ENCODE measurements at regions of chr18 and their contacts with region 1.

Region 1: GRCh38 chr18:63320046-63320689 is 599 bp upstream of the BCL2 start:
- DNase-seq: peak; percentile 71
- H3K4me3 ChIP-seq: peak overlapping the region; percentile 4 to 66 (median 43)
- H3K27ac ChIP-seq: peak overlapping the region; percentile 44
- H3K4me1 ChIP-seq: peaks cover 25% of the 10 kb centered on the region
- H3K27me3 ChIP-seq: peaks cover 0 to 9% of the 10 kb centered on the region in 2 experiments
- CTCF ChIP-seq: no peak
- POLR2A ChIP-seq: no peak

Region 2: GRCh38 chr18:63016270-63016669 is 303.9 kb before region 1 on chr18:
- CTCF ChIA-PET with region 1: interaction called, 176 read pairs
- POLR2A ChIA-PET with region 1: no interaction called
- dilution Hi-C with region 1: no loop called
- intact Hi-C with region 1: loop called (anchors 1 kb)
- DNase-seq: peak; percentile 39
- H3K4me3 ChIP-seq: no peak overlapping the region
- H3K27ac ChIP-seq: no peak overlapping the region
- H3K4me1 ChIP-seq: no peaks in the 10 kb centered on the region
- H3K27me3 ChIP-seq: peaks cover 18 to 21% of the 10 kb centered on the region in 2 experiments
- CTCF ChIP-seq: peak; percentile 71 to 75
- POLR2A ChIP-seq: no peak

Region 3: DNA sequence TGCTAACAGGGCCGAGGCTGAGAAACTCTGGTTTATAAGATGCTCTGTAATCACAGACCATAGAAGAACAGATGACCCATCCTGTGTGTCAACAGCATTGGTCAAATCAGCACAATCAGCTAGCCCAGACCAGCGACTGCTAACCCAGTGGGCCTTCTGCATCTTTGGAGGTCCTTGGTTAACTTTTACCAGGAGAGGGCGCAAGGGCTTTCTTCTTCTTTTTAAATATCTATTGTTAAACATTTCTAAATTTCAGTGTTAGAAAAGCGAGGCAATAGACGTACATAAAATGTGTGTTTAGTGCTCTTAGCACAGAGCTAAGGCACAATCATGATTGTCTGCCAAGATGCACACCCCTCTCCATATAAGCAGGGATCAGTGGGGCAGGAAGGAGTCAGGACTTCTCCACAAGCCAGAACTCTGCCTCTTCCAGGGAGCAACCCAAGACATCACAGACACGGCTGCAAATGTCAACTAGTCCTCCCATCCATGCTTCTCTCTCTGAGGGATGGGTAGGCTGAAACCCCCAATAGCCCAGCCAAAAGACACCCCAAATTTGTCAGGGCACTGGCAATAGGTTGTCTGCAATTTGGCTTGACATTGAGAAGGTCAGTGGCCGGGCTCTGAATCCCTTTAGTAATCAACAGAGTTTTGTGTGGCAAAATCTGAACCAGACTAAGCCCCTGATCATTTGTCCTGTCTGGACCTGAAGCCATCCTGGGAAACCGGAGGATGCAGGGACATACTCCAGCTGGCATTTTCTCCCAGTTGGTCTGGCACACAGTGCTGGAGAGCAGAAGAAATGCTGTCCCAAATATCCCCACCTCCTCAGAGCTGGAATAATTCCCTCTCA is 188.8 kb before region 1 on chr18:
- CTCF ChIA-PET with region 1: interaction called, 96 read pairs
- POLR2A ChIA-PET with region 1: no interaction called
- dilution Hi-C with region 1: no loop called
- intact Hi-C with region 1: loop called (anchors 1 kb)
- DNase-seq: peak; percentile 52
- H3K4me3 ChIP-seq: no peak overlapping the region
- H3K27ac ChIP-seq: no peak overlapping the region
- H3K4me1 ChIP-seq: no peaks in the 10 kb centered on the region
- H3K27me3 ChIP-seq: no peaks in the 10 kb centered on the region
- CTCF ChIP-seq: peak; percentile 57 to 61
- POLR2A ChIP-seq: no peak

Region 4: DNA sequence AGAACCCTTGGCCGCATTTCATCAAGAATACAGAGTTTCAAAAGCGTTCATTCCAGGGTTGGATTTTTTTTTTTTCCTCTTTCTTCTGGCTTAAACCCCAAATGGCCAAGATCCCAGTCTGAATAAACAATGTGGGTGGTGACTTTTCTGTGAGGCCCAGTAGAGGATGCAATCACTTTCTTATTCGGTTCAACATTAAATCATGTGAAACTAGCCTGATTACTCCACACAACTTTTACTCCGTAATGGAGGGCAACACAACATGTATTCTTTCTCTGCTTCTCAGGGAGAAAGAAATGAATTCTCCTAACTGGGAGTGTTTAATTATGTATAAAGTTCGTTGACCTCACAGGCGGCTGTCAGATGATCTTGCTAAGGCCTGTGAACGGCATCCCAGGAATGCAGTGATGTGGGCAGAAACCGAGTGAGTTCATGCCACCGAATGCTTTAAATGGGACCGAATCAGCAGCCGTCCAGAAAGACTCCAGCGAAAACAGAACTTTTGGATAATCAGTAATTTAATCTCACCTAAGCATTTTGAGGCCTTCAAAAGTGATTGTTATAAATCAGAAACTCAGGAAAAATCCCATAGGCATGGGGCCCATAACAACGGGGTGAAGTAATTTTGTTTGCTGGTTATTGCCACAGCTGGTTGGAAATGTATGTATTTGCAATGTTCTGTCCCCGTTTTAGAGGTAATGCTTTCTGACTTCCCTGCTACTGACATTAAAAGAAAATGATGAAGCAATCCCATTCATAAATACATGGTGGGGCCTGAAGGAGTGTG is 82.1 kb before region 1 on chr18:
- CTCF ChIA-PET with region 1: no interaction called
- POLR2A ChIA-PET with region 1: no interaction called
- dilution Hi-C with region 1: no loop called
- intact Hi-C with region 1: loop called (anchors 2 kb)
- DNase-seq: peak; percentile 84
- H3K4me3 ChIP-seq: no peak overlapping the region
- H3K27ac ChIP-seq: peak overlapping the region; percentile 21
- H3K4me1 ChIP-seq: peaks cover 7% of the 10 kb centered on the region
- H3K27me3 ChIP-seq: no peaks in the 10 kb centered on the region
- CTCF ChIP-seq: no peak
- POLR2A ChIP-seq: no peak

Region 5: GRCh38 chr18:63271881-63272299 is 48.3 kb before region 1 on chr18:
- CTCF ChIA-PET with region 1: no interaction called
- POLR2A ChIA-PET with region 1: no interaction called
- dilution Hi-C with region 1: no loop called
- intact Hi-C with region 1: no loop called
- DNase-seq: no peak
- H3K4me3 ChIP-seq: no peak overlapping the region
- H3K27ac ChIP-seq: no peak overlapping the region
- H3K4me1 ChIP-seq: no peaks in the 10 kb centered on the region
- H3K27me3 ChIP-seq: peaks cover 2% of the 10 kb centered on the region in 2 experiments
- CTCF ChIP-seq: no peak
- POLR2A ChIP-seq: no peak

Region 6: GRCh38 chr18:63367053-63367953 is 47.1 kb after region 1 on chr18 and contains the start of gene KDSR:
- CTCF ChIA-PET with region 1: interaction called, 8 read pairs
- POLR2A ChIA-PET with region 1: no interaction called
- dilution Hi-C with region 1: no loop called
- intact Hi-C with region 1: loop called (anchors 2 kb)
- DNase-seq: peak; percentile 98
- H3K4me3 ChIP-seq: peak within 1 kb of the TSS; percentile 85 to 95 (median 94)
- H3K27ac ChIP-seq: peak within 1 kb of the TSS; percentile 89
- H3K4me1 ChIP-seq: peaks cover 12% of the 10 kb centered on the region
- H3K27me3 ChIP-seq: no peaks in the 10 kb centered on the region
- CTCF ChIP-seq: no peak
- POLR2A ChIP-seq: peak; percentile 92
- total RNA-seq, gene KDSR: 40.6 and 43.1 TPM in 2 replicates